Motor neuron (in vitro differentiated cells): ENCODE measurements at regions of chr11 and their contacts with region 1.

Region 1: GRCh38 chr11:61129639-61130523 is 27.6 kb downstream of the CD5 start:
- ATAC-seq: peak; percentile 91 to 95 (median 92)
- H3K4me3 ChIP-seq: peak overlapping the region in 1 of 5 donors; percentile 28
- H3K27ac ChIP-seq: peak overlapping the region in 1 of 2 donors; percentile 69
- H3K4me1 ChIP-seq: peaks cover 15 to 19% of the 10 kb centered on the region in 2 donors

Region 2: DNA sequence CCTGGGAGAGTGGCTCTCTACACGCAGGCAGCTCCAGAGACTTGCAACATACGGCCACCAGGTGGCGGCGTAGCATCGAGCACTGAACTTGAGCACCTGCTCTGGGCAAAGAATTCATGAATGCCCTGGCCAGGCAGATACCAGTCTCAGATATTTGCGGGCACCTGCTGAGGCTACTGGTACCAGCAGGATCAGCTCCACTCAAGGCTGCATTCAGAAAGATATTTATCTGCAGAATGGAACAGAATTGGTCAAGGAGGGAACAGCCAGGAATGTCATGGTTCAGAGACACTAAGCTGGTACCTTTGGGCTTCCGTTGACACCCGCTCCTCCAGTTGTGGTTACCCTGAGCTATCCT is 298.8 kb before region 1 on chr11:
- in situ Hi-C with region 1: loop called in 1 of 9 experiments (anchors 10 kb)
- ATAC-seq: peak; percentile 75 to 98 (median 93)
- H3K4me3 ChIP-seq: peak overlapping the region in 2 of 5 donors; percentile 12 to 16
- H3K27ac ChIP-seq: no peak overlapping the region
- H3K4me1 ChIP-seq: no peaks in the 10 kb centered on the region

Region 3: DNA sequence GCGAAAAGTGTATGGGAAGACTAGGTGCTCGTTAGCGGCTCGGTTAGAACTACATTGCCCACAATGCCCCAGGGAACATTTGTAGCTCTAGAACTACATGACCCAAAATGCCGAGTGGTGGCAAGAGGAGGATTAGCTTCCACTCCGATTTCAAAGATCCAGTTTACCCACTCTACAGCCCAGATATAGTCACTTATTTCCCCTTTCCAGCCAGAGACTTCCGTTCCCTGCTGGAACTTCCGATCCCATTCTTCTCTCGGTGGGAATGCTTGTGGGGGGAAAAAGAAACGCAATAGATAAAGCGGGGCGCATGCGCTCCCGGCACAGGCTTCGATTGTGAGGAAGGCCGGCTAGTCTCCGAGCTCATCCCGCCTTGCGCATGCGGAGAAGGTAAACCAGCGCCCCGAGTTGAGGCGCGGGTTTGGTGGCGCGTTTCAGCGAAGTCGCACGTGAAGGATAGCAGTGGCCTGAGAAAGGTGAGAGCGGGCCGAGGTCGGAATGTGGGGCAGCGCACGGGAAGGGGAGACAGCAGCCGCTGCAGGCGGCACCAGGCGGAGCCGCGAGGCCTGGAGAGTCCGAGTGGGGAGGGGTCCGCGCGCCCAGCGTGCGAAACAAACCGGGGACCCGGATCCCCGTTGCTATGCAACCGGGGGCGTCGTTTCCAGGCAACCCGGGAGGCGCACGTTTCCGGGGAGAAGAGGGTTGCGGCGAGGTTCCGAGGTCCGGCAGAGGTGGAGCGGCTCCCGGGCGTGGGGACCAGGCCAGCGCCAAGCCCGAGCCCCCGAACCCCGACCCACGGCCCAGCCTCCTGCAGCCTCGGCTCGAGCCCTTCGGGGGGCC is 215.9 kb before region 1 on chr11 and contains the start of gene TMEM109:
- in situ Hi-C with region 1: loop called in 2 of 9 experiments (anchors 10 kb)
- ATAC-seq: peak; percentile 69 to 87 (median 80)
- H3K4me3 ChIP-seq: peak within 1 kb of the TSS; percentile 46 to 70 (median 62)
- H3K27ac ChIP-seq: peak within 1 kb of the TSS; percentile 94 to 98
- H3K4me1 ChIP-seq: peaks cover 15% of the 10 kb centered on the region in 2 donors
- total RNA-seq, gene TMEM109: 5.1 to 72.7 (median 28.6) TPM

Region 4: DNA sequence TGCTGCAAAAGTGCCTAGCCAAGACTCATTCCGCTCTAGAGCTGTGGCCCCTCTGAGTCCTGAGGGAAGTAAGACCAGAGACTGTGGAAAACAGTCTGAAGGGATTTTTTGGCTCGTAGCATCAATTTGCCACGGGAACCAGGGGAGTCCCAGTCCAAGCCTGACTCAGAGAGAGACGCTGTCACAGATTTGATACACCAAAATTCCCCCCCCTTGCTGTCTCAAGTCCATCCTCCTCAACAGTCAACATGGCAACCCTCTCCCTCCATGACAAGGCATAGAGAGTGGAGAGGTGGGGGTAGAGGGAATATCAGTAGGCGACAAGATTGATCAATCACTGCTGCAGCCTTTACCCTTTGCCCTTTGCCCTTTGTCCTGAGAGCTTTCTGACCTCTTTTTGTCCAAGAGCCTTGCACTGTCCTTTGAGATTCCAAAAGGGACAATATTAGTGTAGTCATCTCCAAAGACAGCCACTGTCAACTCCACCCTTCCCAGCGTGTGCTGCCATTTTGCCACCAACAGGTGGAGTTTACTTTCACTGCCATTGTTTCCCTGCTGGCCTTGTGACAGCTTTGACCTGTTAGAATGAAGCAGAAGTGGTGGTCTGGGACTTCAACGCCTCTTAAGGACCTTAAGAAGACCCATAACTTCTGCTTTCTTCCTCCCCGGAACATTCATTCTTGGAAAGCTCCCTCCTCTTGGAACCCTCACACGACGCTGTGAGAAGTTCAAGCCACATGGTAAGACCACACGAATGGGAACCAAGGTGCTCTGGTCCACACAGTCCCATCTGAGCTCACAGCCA is 185.2 kb before region 1 on chr11:
- in situ Hi-C with region 1: loop called in 1 of 9 experiments (anchors 10 kb)
- ATAC-seq: no peak
- H3K4me3 ChIP-seq: no peak overlapping the region
- H3K27ac ChIP-seq: no peak overlapping the region
- H3K4me1 ChIP-seq: peaks cover 25 to 35% of the 10 kb centered on the region in 2 donors